Breast epithelium (tissue), 4 donors: ENCODE measurements at regions of chr20 and their contacts with region 1.

Region 1: DNA sequence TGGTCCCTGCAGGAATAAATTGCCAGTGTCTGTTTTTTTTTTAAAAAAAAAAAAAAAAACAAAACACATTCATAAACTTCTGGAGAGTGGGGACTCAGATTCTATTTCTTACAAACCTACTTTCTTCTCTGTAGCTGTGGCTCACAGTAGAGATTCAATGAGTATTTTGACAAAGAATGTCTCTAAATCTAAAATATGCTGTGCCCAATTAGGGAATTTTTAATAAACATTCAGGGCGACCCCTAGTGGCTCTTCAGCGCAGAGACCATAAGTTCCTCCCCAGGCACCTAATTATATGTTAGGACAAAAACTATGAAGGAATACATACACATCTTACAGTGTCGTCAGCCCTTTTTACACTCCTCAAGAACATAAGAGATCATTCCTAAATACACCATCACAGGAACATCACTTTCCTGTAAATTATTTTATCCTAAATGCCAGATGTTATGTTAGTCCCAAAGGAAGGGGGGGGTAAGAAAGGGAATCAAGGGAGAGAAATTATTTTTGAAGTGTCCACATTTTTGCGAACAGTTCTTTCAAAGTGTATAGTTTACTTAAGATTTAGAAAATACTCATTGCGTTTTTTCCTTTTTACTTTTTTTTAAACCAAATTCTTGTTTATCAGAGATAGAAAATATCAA is 21.8 kb upstream of the NAA20 start:
- DNase-seq: no peak
- H3K4me3 ChIP-seq: no peak overlapping the region
- H3K27ac ChIP-seq: peak overlapping the region in 1 of 2 donors; percentile 91
- H3K4me1 ChIP-seq: peaks cover 5 to 44% of the 10 kb centered on the region in 2 donors
- H3K27me3 ChIP-seq: no peaks in the 10 kb centered on the region
- CTCF ChIP-seq: peak; percentile 69 to 83 (median 82)
- POLR2A ChIP-seq: no peak

Region 2: GRCh38 chr20:19692685-19693119 is 302.6 kb before region 1 on chr20:
- intact Hi-C with region 1: loop called (anchors 10 kb)
- DNase-seq: peak; percentile 20 to 70
- H3K4me3 ChIP-seq: peak overlapping the region in 1 of 3 donors; percentile 36
- H3K27ac ChIP-seq: no peak overlapping the region
- H3K4me1 ChIP-seq: no peaks in the 10 kb centered on the region
- H3K27me3 ChIP-seq: no peaks in the 10 kb centered on the region
- CTCF ChIP-seq: peak; percentile 89 to 95 (median 93)
- POLR2A ChIP-seq: no peak

Region 3: GRCh38 chr20:19937218-19937617 is 58.1 kb before region 1 on chr20:
- intact Hi-C with region 1: no loop called
- DNase-seq: no peak
- H3K4me3 ChIP-seq: peak overlapping the region; percentile 25 to 64 (median 45)
- H3K27ac ChIP-seq: peak overlapping the region; percentile 94 to 97
- H3K4me1 ChIP-seq: peaks cover 12 to 22% of the 10 kb centered on the region in 2 donors
- H3K27me3 ChIP-seq: no peaks in the 10 kb centered on the region
- CTCF ChIP-seq: no peak
- POLR2A ChIP-seq: no peak